Astrocyte of the cerebellum (primary cell): ENCODE measurements at regions of chr16 and their contacts with region 1.

Region 1: DNA sequence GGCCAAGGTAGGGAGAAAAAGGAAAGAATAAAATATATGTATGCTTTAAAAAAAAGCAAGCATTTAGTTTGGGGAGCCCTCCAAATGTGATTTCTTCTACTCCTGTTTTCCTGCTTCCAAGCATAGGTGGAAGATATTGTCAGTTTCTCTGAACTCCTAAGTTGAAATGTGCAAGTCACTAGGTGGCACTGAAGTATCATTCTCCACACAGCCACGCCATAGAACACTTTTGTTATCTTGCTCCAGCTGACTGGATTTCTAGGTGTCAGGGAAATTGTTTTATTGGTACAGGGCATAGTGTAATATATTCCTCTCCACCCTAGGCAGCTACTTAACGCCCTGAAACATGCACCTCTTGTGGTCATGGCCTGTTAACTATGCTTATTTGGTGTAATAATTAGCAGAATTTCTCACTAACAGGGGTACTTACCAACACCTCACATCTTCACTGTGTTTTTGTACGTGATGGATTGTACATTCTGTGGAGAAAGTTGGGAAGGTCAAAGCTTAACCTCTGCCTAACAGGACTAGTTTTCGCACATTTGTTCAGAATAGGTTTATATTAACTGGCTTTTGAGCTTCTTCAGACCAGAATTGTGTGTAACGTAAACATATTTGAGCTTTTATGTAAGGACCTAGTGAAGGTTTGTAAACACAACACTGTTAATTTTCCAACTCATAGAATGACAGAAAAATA is 69.3 kb downstream of the FTO start:
- DNase-seq: peak; percentile 83
- H3K4me3 ChIP-seq: no peak overlapping the region
- CTCF ChIP-seq: peak; percentile 72

Region 2: DNA sequence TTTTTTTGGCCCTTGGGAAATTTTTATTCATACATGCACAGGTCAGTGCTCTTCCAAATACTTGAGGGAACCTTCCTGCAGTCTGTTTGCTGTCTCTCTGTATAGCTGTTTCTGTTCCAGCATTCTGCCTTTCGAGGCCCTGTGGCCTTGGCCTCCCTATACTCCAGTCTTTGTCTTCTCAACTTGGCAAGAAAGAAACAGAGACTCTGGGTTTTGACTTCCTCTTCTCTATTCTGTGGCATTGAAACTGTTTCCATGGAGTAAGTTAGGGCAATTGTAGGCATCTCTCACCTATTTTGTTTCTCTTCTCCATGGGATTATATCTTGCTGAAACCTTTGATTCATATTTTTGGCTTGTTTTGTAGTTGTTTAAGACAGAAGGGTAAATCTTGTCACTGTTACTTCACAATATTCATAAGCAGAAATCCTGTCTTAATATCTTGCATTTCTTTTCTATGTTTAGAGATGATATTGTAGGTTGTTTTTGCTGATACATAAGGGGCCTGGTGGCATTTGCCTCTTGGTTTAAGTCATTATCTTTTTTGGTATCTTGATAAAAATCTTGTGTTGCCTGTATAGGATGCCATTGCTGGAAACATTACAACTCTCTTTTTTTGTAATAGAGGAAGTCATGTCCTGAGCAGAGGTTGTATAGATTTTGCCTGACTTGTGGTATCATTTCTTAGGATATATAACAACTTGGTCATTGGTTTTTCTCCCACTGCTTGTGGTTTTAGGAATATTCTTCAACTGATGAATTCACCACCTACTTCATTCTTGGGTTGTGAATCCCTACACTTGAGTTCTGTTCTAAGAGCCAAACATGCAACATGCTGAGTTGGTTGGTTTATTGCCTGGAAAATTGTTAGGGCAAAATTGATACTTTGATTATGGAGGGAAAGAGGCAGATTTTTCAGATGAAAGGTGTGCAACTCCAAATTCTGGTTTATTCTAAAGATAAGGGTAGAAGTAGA is 99.2 kb after region 1 on chr16:
- in situ Hi-C with region 1: no loop called
- DNase-seq: peak; percentile 88
- H3K4me3 ChIP-seq: no peak overlapping the region
- CTCF ChIP-seq: no peak

Region 3: DNA sequence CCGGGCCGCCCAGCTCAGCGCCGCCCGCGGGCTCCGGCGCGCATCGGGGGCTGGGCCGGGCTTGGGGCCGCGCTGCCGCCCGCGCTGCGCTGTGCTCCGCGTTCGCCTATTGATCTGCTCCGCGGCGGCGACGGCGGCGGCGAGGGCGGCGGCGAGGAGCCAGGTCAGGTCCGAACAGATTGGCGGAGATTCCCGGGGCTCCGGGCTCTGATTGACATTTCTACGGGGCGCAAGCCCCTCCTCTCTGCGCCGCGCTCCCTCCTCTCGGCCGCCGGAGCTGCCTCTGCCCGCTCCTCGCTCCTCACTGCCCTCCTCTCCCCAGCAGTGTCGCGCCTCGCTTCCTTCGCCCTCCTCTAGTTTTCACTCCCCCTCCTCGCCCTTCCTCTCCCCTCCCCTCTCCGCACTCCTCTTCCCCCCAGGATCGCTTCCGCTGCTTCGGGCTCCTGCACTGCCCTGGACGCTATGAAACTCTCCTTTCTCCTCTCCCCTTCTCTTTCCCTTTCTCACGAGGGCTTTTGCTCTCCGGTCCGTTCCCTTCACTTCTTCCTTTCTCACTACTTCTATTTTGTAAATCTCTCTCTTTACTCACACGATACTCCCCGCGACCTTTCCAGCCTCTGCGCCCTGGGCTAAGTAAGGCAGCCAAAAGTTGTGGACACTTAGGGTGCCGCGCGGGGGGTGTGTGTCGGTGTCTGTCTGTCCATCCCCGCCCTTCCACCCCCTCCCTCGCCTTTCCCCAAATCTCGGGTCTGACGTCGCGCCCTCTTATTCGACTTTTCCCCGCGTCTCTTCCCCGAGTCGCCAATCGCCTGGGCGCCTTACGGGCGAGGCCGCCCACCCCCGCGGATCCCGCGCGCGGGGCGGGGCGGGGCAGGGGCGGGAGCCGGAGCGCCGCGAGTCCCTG is 513.0 kb after region 1 on chr16 and contains the start of gene IRX3:
- in situ Hi-C with region 1: loop called (anchors 10 kb)
- DNase-seq: peak; percentile 82
- H3K4me3 ChIP-seq: peak within 1 kb of the TSS; percentile 78
- CTCF ChIP-seq: no peak

Region 4: DNA sequence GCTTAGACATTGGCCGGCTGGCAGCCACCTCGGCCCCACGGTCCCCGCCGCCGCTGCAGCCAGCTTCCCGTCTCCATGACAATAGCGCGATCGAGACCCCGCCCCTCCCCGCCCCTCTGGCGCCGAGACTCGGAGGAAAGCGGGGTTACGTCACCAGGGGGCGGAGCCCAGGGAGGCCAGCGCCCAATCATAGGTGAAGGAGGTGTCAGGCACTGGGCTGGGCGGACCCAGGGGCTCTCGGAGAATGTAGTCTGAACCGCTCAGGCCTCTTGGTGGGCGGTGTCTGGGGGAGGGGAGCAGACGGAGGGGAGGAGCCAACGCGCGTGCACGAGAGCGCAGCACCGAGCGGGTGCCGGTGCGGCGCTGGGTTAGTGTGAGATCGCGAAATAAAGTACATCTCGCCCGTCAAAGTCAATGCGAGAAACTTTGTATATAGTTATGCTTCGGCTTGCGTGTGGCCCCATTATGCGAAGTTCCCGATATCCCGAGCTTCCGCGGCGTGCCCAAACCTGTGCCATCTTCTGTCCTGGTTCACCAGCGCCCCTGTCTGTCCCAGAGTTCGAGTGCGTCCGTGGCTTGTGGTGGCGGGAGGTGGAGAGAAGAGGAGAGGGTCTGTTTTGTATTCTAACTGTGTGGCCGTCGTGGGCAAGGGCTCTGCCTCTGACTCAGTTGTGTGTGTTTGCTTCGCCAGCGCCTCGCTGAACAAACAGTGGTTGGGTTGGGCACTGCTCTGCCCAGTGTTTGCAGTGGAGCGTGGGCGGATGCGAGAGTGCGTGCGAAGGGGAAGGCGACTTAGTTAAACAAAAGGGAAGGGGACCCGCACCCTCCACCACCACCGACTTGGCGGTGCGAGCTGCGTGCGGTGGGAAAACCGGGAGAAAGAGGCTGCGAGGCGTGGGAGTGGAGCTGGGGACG is 1156.0 kb after region 1 on chr16:
- in situ Hi-C with region 1: loop called (anchors 10 kb)
- DNase-seq: peak; percentile 98
- H3K4me3 ChIP-seq: peak overlapping the region; percentile 78
- CTCF ChIP-seq: no peak